ENCODE measurements at regions of chr1 and their contacts with region 1.

Region 1: DNA sequence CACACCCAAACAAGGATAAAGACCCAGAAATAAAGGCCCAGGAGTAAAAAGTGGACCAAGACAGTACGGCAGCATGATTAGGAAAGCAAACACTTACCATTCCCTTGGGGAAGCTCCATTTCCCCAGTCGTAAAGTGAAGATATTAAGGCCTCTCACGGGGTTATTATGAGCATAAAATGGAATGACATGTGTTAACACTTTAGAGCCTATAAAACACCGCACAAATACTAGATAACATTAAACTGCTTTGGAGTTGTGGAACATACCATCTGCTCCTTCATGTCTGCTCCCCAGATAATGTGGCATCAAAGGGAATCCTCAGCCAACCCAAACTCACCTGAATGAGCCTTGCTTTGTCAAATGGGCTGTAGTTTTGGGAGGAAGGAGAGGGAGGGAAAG is 8.9 kb upstream of the ITLN2 start:
- DNase-seq: no peak
- ATAC-seq: no peak
- H3K4me3 Mint-ChIP-seq: no peak overlapping the region
- H3K27ac Mint-ChIP-seq: no peak overlapping the region
- H3K4me1 Mint-ChIP-seq: no peaks in the 10 kb centered on the region
- H3K27me3 Mint-ChIP-seq: peaks cover 2% of the 10 kb centered on the region

Region 2: GRCh38 chr1:160916666-160917065 is 46.9 kb before region 1 on chr1:
- CTCF ChIA-PET with region 1: no interaction called
- POLR2A ChIA-PET with region 1: no interaction called
- intact Hi-C with region 1: loop called in 1 of 2 experiments (anchors 5 kb)
- DNase-seq: no peak
- ATAC-seq: no peak
- H3K4me3 Mint-ChIP-seq: no peak overlapping the region
- H3K27ac Mint-ChIP-seq: no peak overlapping the region
- H3K4me1 Mint-ChIP-seq: no peaks in the 10 kb centered on the region
- H3K27me3 Mint-ChIP-seq: peaks cover 19% of the 10 kb centered on the region

Region 3: DNA sequence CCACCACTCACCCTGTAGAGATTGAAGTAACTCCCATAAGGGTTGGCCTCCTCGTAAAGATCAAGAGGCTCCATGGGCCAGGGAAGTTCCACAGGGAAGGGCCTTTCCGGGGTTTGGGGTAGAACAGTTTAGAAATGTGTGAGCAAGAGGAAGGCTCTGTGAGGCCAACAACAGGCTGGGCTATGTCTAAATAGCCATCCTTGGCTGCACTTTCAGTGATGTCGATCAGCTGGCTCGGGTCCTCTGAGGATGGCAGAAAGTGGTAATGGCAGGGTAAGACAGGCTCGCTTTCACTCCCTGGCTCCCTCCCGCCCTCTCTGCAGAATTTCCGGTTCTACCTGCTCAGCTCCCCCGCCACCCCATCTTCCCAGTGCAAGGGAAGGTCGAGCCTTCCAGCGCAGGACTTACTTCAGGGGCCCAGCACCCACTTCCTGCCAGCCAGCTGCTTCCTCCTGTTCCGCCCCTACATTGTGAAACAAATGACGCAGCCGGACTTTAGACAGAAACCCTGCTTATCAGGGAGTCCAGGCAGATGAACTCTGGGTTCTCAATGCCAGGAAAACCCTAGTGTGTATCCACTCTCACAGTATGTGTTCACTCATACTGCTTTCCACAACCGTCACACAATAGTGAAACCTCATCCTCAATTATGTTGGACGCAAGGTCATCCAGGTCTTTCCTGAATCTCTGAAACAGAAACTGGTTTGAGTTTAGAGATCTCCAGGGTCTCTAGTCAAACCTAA is 50.1 kb after region 1 on chr1:
- CTCF ChIA-PET with region 1: no interaction called
- POLR2A ChIA-PET with region 1: no interaction called
- intact Hi-C with region 1: loop called in 1 of 2 experiments (anchors 5 kb)
- DNase-seq: peak; percentile 82
- ATAC-seq: peak; percentile 85
- H3K4me3 Mint-ChIP-seq: peak overlapping the region; percentile 70
- H3K27ac Mint-ChIP-seq: peak overlapping the region; percentile 91
- H3K4me1 Mint-ChIP-seq: peaks cover 31% of the 10 kb centered on the region
- H3K27me3 Mint-ChIP-seq: no peaks in the 10 kb centered on the region

Region 4: GRCh38 chr1:162117039-162117774 is 1153.7 kb after region 1 on chr1:
- CTCF ChIA-PET with region 1: no interaction called
- POLR2A ChIA-PET with region 1: no interaction called
- intact Hi-C with region 1: no loop called
- DNase-seq: no peak
- ATAC-seq: no peak
- H3K4me3 Mint-ChIP-seq: no peak overlapping the region
- H3K27ac Mint-ChIP-seq: no peak overlapping the region
- H3K4me1 Mint-ChIP-seq: no peaks in the 10 kb centered on the region
- H3K27me3 Mint-ChIP-seq: peaks cover 15% of the 10 kb centered on the region

Measured in activated CD4-positive, alpha-beta T cell treated with anti-CD3 and anti-CD28 coated beads for 36 hours (primary cell).